ENCODE measurements at regions of chr1 and their contacts with region 1.

Region 1: DNA sequence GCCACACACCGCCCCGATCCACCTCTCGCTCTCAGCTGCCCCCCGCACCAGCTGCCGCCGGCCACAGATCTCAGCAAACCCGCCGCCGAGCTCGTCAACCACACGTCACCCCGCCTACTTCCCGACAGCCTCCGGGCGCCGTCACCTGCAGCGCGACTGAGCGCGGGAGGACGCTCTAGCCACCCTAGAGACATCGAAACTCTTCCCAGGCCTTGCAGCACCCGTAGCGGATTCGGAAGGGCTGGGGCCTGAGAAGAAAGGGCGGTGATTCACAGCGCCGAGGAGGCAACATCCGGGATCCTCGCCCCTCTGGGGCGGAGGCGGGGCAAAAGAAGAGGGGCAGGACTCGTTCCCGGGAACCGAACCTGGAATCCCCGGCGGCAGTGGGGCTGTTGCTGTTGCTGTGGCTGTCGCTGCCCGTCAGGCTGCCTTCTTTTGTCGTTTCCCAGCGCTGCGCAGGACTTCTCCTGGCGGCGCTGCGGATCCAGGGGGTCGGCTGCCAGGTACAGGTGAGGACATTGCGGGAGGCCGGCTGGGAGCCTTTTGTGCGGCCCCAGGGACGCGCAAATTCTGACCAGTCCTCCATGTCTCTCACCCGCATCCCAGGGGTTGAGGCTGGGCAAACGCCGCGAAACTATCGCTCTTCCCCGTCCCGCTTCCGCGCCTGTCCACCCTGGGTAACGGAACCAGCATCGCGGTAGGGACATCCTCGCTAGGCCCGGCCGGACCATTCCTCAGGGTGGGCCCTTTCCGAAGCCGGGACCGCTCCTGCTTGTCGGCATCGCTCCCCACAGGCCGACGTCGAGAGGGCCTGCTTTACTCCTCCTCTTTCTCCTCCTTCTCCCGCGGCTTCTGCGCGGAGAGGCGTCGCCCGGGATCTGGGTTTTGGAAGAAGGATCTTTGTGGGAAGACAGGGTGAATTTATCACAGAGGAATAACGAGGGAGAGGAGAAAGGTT is at the starts of genes RO60 and UCHL5:
- DNase-seq: peak; percentile 95
- H3K4me3 ChIP-seq: peak within 1 kb of the TSS; percentile 90
- H3K27ac ChIP-seq: peak within 1 kb of the TSS; percentile 98
- H3K4me1 ChIP-seq: peaks cover 78% of the 10 kb centered on the region
- H3K27me3 ChIP-seq: no peaks in the 10 kb centered on the region
- CTCF ChIP-seq: no peak
- total RNA-seq, gene RO60: 51.8 TPM
- total RNA-seq, gene UCHL5: 43.0 TPM

Region 2: DNA sequence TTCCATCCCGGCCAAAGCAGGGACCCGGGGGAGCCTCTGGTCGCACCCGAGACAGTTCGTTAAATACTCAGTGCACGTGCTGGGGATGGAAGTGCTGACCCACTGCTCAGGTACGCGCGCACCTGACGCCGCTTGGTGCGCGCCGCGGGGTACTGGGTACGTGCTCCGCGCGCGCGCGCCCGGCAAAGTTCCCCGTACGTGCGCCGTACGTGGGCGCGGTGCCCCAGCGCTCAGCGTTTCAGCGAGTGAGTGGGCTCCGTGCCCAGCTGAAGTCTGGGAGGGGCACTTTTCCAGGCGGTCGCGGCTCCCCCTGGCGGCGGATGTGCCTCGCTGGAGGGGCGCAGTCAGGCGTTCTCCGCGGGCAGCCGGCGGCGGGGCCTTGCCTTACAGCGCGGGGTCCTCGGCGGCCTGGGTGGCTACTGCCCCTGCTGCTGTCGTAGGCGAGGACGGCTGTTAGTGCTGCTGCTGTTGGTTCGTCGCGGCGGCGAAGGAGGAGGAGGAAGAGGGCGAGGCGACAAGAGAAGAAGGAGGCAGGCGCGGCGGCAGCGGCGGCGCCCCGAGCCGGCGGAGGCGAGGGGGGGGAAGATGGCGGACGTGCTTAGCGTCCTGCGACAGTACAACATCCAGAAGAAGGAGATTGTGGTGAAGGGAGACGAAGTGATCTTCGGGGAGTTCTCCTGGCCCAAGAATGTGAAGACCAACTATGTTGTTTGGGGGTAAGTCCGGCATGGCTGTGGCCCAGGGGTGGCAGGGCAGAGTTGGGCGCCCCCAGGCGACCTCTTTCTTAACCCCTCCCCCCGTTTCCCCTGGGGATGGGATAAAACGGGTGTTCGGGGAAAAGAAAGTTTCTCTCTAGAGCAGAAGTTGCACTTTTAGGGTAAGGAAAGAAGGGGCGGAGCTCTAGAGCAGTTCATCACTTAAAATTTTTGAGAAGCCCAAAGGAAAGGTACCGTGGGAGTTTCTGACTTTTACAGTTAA is 62.4 kb after region 1 on chr1 and contains the start of gene CDC73:
- intact Hi-C with region 1: loop called (anchors 10 kb)
- DNase-seq: peak; percentile 98
- H3K4me3 ChIP-seq: peak within 1 kb of the TSS; percentile 87
- H3K27ac ChIP-seq: peak within 1 kb of the TSS; percentile 97
- H3K4me1 ChIP-seq: peaks cover 47% of the 10 kb centered on the region
- H3K27me3 ChIP-seq: no peaks in the 10 kb centered on the region
- CTCF ChIP-seq: peak; percentile 95
- total RNA-seq, gene CDC73: 46.8 TPM

Measured in left ventricle myocardium inferior (tissue), 1 donor.